ENCODE measurements at regions of chr1 and their contacts with region 1.

Region 1: GRCh38 chr1:170074250-170075157 is at the start of gene KIFAP3:
- DNase-seq: peak; percentile 93 to 95
- H3K4me3 ChIP-seq: peak within 1 kb of the TSS; percentile 88
- H3K27ac ChIP-seq: no peak within 1 kb of the TSS
- H3K4me1 ChIP-seq: peaks cover 14% of the 10 kb centered on the region; the same call in 1 of the 2 replicates
- H3K27me3 ChIP-seq: no peaks in the 10 kb centered on the region
- CTCF ChIP-seq: peak; percentile 68
- total RNA-seq, gene KIFAP3: 9.7 and 13.5 TPM in 2 replicates

Region 2: GRCh38 chr1:169893494-169894362 is 180.8 kb before region 1 on chr1 and contains the start of gene SCYL3:
- CTCF ChIA-PET with region 1: no interaction called
- POLR2A ChIA-PET with region 1: no interaction called
- intact Hi-C with region 1: loop called (anchors 1 kb)
- DNase-seq: peak; percentile 88 to 89
- H3K4me3 ChIP-seq: peak within 1 kb of the TSS; percentile 68
- H3K27ac ChIP-seq: peak within 1 kb of the TSS; percentile 91
- H3K4me1 ChIP-seq: peaks cover 33% of the 10 kb centered on the region
- H3K27me3 ChIP-seq: no peaks in the 10 kb centered on the region
- CTCF ChIP-seq: no peak
- total RNA-seq, gene SCYL3: 7.5 and 7.8 TPM in 2 replicates

Region 3: GRCh38 chr1:169933984-169934725 is 140.3 kb before region 1 on chr1:
- CTCF ChIA-PET with region 1: no interaction called
- POLR2A ChIA-PET with region 1: no interaction called
- intact Hi-C with region 1: loop called (anchors 5 kb)
- DNase-seq: peak; percentile 37 to 38
- H3K4me3 ChIP-seq: no peak overlapping the region
- H3K27ac ChIP-seq: no peak overlapping the region
- H3K4me1 ChIP-seq: no peaks in the 10 kb centered on the region
- H3K27me3 ChIP-seq: no peaks in the 10 kb centered on the region
- CTCF ChIP-seq: no peak

Region 4: GRCh38 chr1:170562646-170563338 is 488.3 kb after region 1 on chr1:
- CTCF ChIA-PET with region 1: no interaction called
- POLR2A ChIA-PET with region 1: no interaction called
- intact Hi-C with region 1: loop called (anchors 10 kb)
- DNase-seq: peak; percentile 65 to 69
- H3K4me3 ChIP-seq: no peak overlapping the region
- H3K27ac ChIP-seq: peak overlapping the region; percentile 55
- H3K4me1 ChIP-seq: peaks cover 17% of the 10 kb centered on the region
- H3K27me3 ChIP-seq: no peaks in the 10 kb centered on the region
- CTCF ChIP-seq: no peak